ENCODE measurements at regions of chr7 and their contacts with region 1.

Region 1: GRCh38 chr7:56003749-56004148 is 39.4 kb downstream of the NIPSNAP2 start:
- DNase-seq: no peak
- ATAC-seq: no peak
- H3K4me3 ChIP-seq: no peak overlapping the region
- H3K27ac ChIP-seq: no peak overlapping the region
- H3K4me1 ChIP-seq: no peaks in the 10 kb centered on the region
- H3K27me3 ChIP-seq: no peaks in the 10 kb centered on the region
- CTCF ChIP-seq: no peak

Region 2: GRCh38 chr7:56074371-56074791 is 70.6 kb after region 1 on chr7:
- CTCF ChIA-PET with region 1: no interaction called
- POLR2A ChIA-PET with region 1: no interaction called
- intact Hi-C with region 1: loop called (anchors 1 kb)
- DNase-seq: peak; percentile 90
- ATAC-seq: peak; percentile 95
- H3K4me3 ChIP-seq: no peak overlapping the region
- H3K27ac ChIP-seq: no peak overlapping the region
- H3K4me1 ChIP-seq: peaks cover 4% of the 10 kb centered on the region
- H3K27me3 ChIP-seq: no peaks in the 10 kb centered on the region
- CTCF ChIP-seq: peak; percentile 90

Region 3: GRCh38 chr7:56605146-56605545 is 601.4 kb after region 1 on chr7:
- CTCF ChIA-PET with region 1: no interaction called
- POLR2A ChIA-PET with region 1: no interaction called
- intact Hi-C with region 1: no loop called
- DNase-seq: no peak
- ATAC-seq: no peak
- H3K4me3 ChIP-seq: no peak overlapping the region
- H3K27ac ChIP-seq: no peak overlapping the region
- H3K4me1 ChIP-seq: no peaks in the 10 kb centered on the region
- H3K27me3 ChIP-seq: no peaks in the 10 kb centered on the region
- CTCF ChIP-seq: no peak